Naive thymus-derived CD4-positive, alpha-beta T cell (primary cell): ENCODE measurements at regions of chr2 and their contacts with region 1.

Region 1: DNA sequence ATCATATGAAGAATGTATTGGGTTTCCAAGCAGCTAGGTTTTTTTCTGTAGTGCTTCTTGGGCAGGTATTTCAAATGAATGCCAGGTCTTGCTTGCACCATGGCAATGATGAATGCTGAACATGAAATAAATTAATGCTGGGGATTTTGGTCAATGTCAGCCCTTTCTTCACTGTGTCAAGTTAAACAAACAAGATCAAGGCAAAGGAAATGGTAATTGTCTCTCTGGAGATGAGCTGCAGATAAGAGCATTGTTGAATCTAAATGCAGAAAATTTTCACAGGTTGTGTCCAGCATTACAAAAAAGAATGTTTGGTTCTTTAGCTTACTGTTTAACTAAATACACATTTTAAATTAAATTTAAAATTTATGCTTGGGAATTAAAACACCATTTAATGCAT is 144.3 kb downstream of the GPD2 start:
- DNase-seq: peak in 4 of 9 donors; percentile 5 to 18 (median 9)
- ATAC-seq: peak; percentile 48
- H3K4me3 ChIP-seq: no peak overlapping the region
- H3K4me3 Mint-ChIP-seq: peak overlapping the region in 2 of 10 donors; percentile 15 to 23
- H3K27ac ChIP-seq: no peak overlapping the region
- H3K27ac Mint-ChIP-seq: peak overlapping the region in 3 of 9 donors; percentile 3 to 60 (median 38)
- H3K4me1 ChIP-seq: peaks cover 0 to 8% of the 10 kb centered on the region in 2 donors
- H3K4me1 Mint-ChIP-seq: peaks cover 0 to 21% (median 13%) of the 10 kb centered on the region in 7 donors
- H3K27me3 ChIP-seq: no peaks in the 10 kb centered on the region
- H3K27me3 Mint-ChIP-seq: no peaks in the 10 kb centered on the region

Region 2: DNA sequence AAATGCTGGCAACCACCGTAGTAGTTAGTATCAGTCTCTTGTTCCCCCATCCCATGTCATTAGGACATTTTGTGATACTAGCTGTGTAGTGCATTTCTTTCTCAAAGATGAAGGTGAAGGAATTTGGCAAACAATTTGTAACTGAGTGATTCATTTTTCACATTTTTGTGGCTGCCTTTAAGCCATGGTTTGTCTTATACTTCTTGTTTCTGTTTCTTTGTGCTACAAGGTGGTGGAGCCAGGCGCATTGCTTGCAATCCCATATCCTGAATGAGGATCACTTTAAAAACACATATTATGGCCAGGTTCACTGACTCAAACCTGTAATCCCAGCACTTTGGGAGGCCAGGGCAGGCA is 103.7 kb before region 1 on chr2:
- CTCF ChIA-PET with region 1: no interaction called
- POLR2A ChIA-PET with region 1: no interaction called
- intact Hi-C with region 1: loop called in 1 of 2 experiments (anchors 5 kb)
- DNase-seq: no peak
- ATAC-seq: no peak
- H3K4me3 ChIP-seq: no peak overlapping the region
- H3K4me3 Mint-ChIP-seq: peak overlapping the region in 1 of 10 donors; percentile 58
- H3K27ac ChIP-seq: no peak overlapping the region
- H3K27ac Mint-ChIP-seq: peak overlapping the region in 2 of 9 donors; percentile 24 to 85
- H3K4me1 ChIP-seq: peaks cover 0 to 16% of the 10 kb centered on the region in 2 donors
- H3K4me1 Mint-ChIP-seq: peaks cover 0 to 40% (median 7%) of the 10 kb centered on the region in 7 donors
- H3K27me3 ChIP-seq: no peaks in the 10 kb centered on the region
- H3K27me3 Mint-ChIP-seq: no peaks in the 10 kb centered on the region

Region 3: DNA sequence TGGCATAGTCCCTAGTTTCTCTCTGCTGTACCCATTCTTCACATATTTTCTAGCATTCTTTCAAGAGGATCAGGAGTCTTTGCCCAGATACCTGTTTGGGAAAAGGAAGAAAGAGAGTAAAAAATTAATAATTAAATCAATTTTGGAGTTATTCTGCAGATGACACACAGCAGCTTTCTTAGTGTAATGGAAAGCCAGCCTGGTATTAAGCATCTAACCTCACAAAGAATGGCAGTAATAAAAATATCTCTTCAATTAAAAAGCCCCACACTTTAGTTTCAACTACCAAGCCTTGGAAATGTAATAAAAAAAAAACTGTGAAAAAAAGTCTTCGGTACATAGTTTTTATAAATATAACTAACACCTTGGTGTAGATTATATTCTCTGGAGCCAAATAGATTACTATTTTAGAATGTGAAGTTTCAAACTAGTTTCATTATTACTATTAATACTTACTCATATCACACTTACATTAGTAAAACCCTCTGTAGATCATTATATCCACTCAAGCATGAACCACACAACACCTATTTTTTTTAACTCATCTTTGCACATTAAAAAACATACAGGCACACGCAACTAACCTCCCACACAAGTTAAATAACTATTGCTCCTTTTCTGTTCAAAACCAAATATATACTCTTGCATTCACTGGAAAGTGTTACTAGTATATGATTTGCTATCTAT is 53.4 kb before region 1 on chr2:
- CTCF ChIA-PET with region 1: no interaction called
- POLR2A ChIA-PET with region 1: no interaction called
- intact Hi-C with region 1: no loop called
- DNase-seq: no peak
- ATAC-seq: no peak
- H3K4me3 ChIP-seq: no peak overlapping the region
- H3K4me3 Mint-ChIP-seq: no peak overlapping the region
- H3K27ac ChIP-seq: no peak overlapping the region
- H3K27ac Mint-ChIP-seq: peak overlapping the region in 1 of 9 donors; percentile 6
- H3K4me1 ChIP-seq: peaks cover 0 to 3% of the 10 kb centered on the region in 2 donors
- H3K4me1 Mint-ChIP-seq: no peaks in the 10 kb centered on the region
- H3K27me3 ChIP-seq: no peaks in the 10 kb centered on the region
- H3K27me3 Mint-ChIP-seq: no peaks in the 10 kb centered on the region